CD8-positive, alpha-beta T cell (primary cell): ENCODE measurements at regions of chr16 and their contacts with region 1.

Region 1: GRCh38 chr16:68417711-68418301 is 30.5 kb downstream of the SMPD3 start:
- DNase-seq: peak; percentile 50 to 90 (median 83)
- ATAC-seq: peak; percentile 90
- H3K4me3 ChIP-seq: peak overlapping the region in 1 of 2 experiments; percentile 19
- H3K4me3 Mint-ChIP-seq: peak overlapping the region; percentile 80
- H3K27ac ChIP-seq: peak overlapping the region; percentile 33 to 89
- H3K27ac Mint-ChIP-seq: peak overlapping the region; percentile 98
- H3K4me1 ChIP-seq: peaks cover 37% of the 10 kb centered on the region
- H3K4me1 Mint-ChIP-seq: peaks cover 42% of the 10 kb centered on the region
- H3K27me3 ChIP-seq: no peaks in the 10 kb centered on the region
- H3K27me3 Mint-ChIP-seq: no peaks in the 10 kb centered on the region
- CTCF ChIP-seq: no peak

Region 2: DNA sequence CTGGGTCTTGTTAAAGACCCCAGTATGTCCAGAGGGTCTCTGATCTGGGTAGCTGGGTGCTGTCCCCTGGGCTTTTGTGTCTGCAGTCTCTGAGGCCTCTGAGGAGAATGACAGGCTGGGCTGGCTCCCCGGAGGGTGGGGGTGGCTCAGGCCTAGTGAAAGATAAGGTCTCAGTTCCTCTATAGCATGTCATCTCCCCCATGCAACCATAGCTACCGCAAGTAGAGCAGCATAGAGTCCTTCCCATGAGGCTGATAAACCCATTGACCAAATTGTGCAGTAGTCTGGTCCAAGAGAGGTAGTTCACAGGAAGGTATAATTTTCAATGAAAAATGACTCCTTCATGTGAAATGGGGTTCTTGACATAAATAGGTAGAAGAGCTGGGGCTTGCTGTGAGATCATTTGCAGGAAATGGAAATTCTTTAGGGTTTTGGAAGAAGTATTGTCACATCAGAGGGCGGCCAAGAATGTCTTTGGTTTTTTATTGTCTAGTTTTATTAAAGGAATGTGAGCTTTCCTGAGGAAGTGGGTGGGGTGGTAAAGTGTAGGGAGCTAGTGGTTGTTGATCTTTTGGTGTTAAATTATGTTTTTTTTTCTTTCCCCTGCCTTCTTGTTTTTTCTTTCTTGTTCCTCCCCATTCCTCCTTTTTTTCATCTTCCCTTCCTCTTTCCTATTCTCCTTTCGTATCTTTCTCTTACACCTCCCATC is 128.0 kb before region 1 on chr16:
- CTCF ChIA-PET with region 1: no interaction called
- POLR2A ChIA-PET with region 1: no interaction called
- intact Hi-C with region 1: no loop called
- DNase-seq: peak in 7 of 9 experiments; percentile 32 to 64 (median 56)
- ATAC-seq: peak; percentile 44
- H3K4me3 ChIP-seq: no peak overlapping the region
- H3K4me3 Mint-ChIP-seq: peak overlapping the region; percentile 53
- H3K27ac ChIP-seq: peak overlapping the region; percentile 26 to 82
- H3K27ac Mint-ChIP-seq: peak overlapping the region; percentile 90
- H3K4me1 ChIP-seq: peaks cover 82% of the 10 kb centered on the region
- H3K4me1 Mint-ChIP-seq: peaks cover 84% of the 10 kb centered on the region
- H3K27me3 ChIP-seq: no peaks in the 10 kb centered on the region
- H3K27me3 Mint-ChIP-seq: no peaks in the 10 kb centered on the region
- CTCF ChIP-seq: no peak

Region 3: DNA sequence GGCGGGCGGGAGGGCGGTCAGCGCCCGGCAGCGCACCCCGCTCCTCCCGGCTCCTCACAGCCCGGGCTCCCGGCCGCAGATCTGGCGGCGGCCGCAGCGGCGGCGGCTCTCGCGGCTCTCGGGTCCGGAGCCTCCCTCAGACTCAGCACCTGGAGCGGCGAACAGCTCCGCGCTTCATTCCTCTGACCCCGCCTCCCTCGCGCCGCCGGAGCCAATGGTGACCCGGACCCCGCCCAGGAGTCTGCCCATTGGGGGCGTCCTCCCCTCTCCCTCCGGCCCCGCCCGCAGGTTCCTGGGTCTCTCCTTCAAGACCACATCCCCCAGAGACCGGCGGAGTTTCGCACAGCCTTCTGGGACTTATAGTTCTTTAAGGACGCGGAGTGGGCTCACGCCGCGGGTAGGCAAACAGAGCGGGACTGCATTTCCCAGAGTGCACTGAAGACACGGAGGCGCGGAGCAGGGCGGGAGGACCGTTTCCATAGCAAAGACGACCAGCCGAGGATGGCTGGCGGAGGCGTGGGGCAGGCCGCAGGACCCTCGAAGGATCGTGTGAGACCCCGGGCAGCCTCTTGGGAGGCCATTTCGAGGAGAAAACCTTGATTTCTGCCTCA is 30.7 kb after region 1 on chr16 and contains the start of gene SMPD3:
- CTCF ChIA-PET with region 1: interaction called, 4 read pairs
- POLR2A ChIA-PET with region 1: interaction called, 5 read pairs
- intact Hi-C with region 1: loop called (anchors 1 kb)
- DNase-seq: peak; percentile 96 to 99 (median 98)
- ATAC-seq: peak; percentile 98
- H3K4me3 ChIP-seq: peak within 1 kb of the TSS; percentile 46 to 49
- H3K4me3 Mint-ChIP-seq: peak within 1 kb of the TSS; percentile 68
- H3K27ac ChIP-seq: peak within 1 kb of the TSS in 1 of 2 experiments; percentile 37
- H3K27ac Mint-ChIP-seq: no peak within 1 kb of the TSS
- H3K4me1 ChIP-seq: peaks cover 26% of the 10 kb centered on the region
- H3K4me1 Mint-ChIP-seq: peaks cover 21% of the 10 kb centered on the region
- H3K27me3 ChIP-seq: peaks cover 18 to 25% of the 10 kb centered on the region in 2 experiments
- H3K27me3 Mint-ChIP-seq: peaks cover 24% of the 10 kb centered on the region
- CTCF ChIP-seq: no peak
- total RNA-seq, gene SMPD3: 0.24 to 0.25 TPM

Region 4: GRCh38 chr16:68470461-68471150 is 52.8 kb after region 1 on chr16:
- CTCF ChIA-PET with region 1: interaction called, 7 read pairs
- POLR2A ChIA-PET with region 1: interaction called, 10 read pairs
- intact Hi-C with region 1: no loop called
- DNase-seq: peak in 5 of 9 experiments; percentile 5 to 60 (median 22)
- ATAC-seq: peak; percentile 59
- H3K4me3 ChIP-seq: peak overlapping the region; percentile 50 to 59
- H3K4me3 Mint-ChIP-seq: peak overlapping the region; percentile 86
- H3K27ac ChIP-seq: peak overlapping the region; percentile 10 to 70
- H3K27ac Mint-ChIP-seq: peak overlapping the region; percentile 90
- H3K4me1 ChIP-seq: peaks cover 36% of the 10 kb centered on the region
- H3K4me1 Mint-ChIP-seq: peaks cover 46% of the 10 kb centered on the region
- H3K27me3 ChIP-seq: no peaks in the 10 kb centered on the region
- H3K27me3 Mint-ChIP-seq: no peaks in the 10 kb centered on the region
- CTCF ChIP-seq: no peak